Activated naive CD8-positive, alpha-beta T cell treated with anti-CD3 and anti-CD28 coated beads, Interleukin-2, amount 10 ng/mL, durations not matched to agents 7 days and 5 days (primary cell): ENCODE measurements at regions of chr7 and their contacts with region 1.

Region 1: DNA sequence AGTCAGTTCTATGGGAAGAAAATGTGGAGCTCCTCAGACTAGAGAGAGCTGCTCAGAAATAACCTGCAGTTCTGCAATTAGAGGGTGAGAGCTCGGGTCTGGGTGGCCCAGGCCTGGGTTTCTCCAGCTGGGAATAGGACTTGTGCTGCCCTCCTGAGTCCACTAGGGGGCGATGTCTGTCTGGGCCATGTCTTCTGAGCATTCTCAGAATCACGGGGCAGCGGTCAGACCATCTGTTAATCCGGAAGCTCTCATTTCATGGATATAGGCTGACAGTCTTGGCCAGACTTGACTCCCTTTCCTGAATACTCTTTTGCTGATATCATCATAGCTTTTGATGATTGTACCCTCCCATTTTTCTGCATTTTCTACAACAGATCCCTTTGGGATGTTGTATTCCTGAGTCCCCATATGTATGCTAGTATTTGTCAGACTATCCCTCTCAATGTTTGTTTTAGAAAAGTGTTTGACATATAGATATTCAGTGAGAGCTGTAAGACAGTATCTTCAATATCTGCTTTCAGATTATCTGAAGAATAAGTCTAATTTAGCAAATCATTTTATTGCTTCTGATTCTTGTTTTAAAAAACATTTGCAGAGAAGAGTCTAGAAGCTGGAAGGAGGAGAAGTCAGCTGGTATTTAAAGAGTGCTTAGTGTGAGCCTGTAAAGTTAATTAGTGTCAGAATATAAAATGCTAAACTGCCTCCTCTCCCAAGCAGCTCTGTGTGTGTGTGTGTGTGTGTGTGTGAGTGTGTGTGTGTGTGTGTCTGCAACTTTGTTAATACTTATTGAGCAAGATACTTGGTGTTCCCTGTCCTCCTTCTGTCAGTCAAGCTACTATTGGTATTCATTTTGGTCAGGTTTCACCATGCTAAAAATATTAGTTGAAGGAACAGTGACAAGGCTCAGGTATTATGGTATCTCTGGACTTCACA is 38.0 kb downstream of the STARD3NL start:
- DNase-seq: peak; percentile 71
- ATAC-seq: peak; percentile 89
- H3K4me3 Mint-ChIP-seq: no peak overlapping the region
- H3K27ac Mint-ChIP-seq: peak overlapping the region; percentile 70
- H3K4me1 Mint-ChIP-seq: peaks cover 42% of the 10 kb centered on the region
- H3K27me3 Mint-ChIP-seq: no peaks in the 10 kb centered on the region

Region 2: GRCh38 chr7:38195804-38196595 is 20.0 kb before region 1 on chr7:
- POLR2A ChIA-PET with region 1: no interaction called
- DNase-seq: no peak
- ATAC-seq: no peak
- H3K4me3 Mint-ChIP-seq: no peak overlapping the region
- H3K27ac Mint-ChIP-seq: no peak overlapping the region
- H3K4me1 Mint-ChIP-seq: peaks cover 14% of the 10 kb centered on the region
- H3K27me3 Mint-ChIP-seq: no peaks in the 10 kb centered on the region

Region 3: DNA sequence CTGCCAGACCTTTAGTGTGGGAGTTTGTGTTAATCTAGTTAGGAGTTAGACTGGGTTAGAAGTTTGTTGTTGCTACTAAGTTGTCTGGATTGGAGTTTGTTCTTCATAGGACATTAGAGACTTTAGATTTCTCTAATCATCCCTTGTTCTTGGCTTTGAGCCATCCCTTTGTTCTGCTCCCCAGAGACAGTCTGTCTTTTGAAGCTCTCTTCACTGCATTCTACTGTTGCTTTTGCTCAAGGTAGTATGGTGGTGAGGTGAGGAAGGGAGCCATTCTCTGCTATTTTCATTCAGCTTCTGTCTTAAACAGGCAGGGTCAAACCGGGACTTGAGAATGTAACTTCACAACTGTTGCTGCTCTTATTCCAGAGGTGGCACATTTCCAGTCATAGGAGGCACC is 67.8 kb after region 1 on chr7:
- POLR2A ChIA-PET with region 1: no interaction called
- DNase-seq: no peak
- ATAC-seq: no peak
- H3K4me3 Mint-ChIP-seq: no peak overlapping the region
- H3K27ac Mint-ChIP-seq: no peak overlapping the region
- H3K4me1 Mint-ChIP-seq: no peaks in the 10 kb centered on the region
- H3K27me3 Mint-ChIP-seq: no peaks in the 10 kb centered on the region

Region 4: GRCh38 chr7:38335492-38336147 is 119.6 kb after region 1 on chr7:
- POLR2A ChIA-PET with region 1: interaction called, 10 read pairs
- DNase-seq: peak; percentile 81
- ATAC-seq: peak; percentile 80
- H3K4me3 Mint-ChIP-seq: peak overlapping the region; percentile 87
- H3K27ac Mint-ChIP-seq: peak overlapping the region; percentile 77
- H3K4me1 Mint-ChIP-seq: peaks cover 43% of the 10 kb centered on the region
- H3K27me3 Mint-ChIP-seq: no peaks in the 10 kb centered on the region